Calu3 (cell line): ENCODE measurements at regions of chr7 and their contacts with region 1.

Region 1: DNA sequence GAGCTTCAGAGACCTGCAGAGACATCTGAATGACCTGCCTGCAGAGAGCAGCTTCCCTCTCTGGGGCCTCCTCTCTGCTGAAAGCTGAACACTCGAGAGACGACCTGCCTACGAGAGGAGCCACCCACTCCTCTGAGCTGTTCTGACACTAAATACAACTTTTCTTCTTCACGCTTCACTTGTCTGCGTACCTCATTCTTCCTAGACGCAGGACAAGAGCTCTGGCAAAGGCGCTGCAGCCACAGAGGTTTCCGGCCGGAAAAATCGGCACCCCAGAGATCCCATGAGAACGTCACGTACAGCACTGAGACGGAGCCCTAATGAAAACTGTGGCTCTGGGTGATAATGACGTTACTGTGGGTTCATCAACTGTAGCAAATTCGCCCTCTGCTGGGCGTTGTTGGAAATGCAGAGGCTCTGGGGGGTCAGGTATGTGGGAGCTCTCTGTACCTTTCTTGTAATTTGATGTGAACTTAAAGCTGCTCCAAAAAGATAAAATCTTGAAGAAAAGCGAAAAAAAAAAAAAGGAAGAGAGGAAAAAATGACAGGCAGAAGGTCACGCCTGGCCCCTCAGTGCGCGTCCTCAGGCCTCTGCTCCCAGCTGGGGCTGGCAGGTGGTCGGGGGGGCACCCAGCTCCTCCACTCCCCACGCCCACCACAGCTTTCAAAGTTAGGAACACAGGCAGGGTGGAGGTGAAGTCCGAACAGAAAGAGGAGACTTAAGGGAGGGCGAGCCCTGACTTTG is 120.7 kb downstream of the DYNC2I1 start:
- DNase-seq: peak; percentile 85
- H3K4me3 Mint-ChIP-seq: peak overlapping the region; percentile 51
- H3K27ac Mint-ChIP-seq: no peak overlapping the region
- H3K4me1 Mint-ChIP-seq: peaks cover 8% of the 10 kb centered on the region
- H3K27me3 Mint-ChIP-seq: no peaks in the 10 kb centered on the region
- CTCF ChIP-seq: peak; percentile 76

Region 2: DNA sequence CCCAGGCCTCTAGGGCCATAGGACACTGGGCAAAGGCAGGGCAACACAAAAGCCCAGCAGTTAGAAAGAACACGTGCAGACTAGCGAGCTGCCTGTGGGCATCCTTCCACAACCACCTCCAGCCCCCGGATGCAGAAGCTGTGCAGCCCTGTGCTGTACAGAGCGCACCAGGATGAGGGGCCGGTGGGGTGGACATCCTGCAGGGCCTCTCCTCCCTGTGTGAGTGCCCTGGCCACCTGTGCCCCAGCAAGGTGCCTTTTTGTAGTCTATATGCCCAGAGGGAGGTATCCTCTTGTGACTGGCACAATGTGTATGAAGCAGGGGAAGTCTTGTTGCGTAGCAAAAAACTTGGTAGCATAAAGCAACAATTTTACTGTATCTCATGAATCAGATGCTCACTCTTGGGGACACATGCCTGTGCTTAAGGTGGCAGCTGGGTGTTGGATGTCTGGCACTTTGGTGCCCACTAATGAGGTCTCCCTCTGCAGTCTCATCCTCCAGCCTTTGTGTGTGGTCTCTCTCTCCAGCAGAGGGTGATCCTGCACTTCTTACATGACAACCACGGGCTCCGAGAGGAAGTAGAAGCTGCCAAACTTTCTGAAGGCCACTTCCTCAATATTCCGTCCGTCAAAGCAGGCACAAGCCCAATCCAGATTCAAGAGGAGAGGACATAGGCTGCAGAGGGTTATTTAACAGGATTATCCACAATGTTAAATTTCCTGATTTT is 281.1 kb before region 1 on chr7:
- CTCF ChIA-PET with region 1: no interaction called
- intact Hi-C with region 1: loop called (anchors 1 kb)
- DNase-seq: no peak
- H3K4me3 Mint-ChIP-seq: no peak overlapping the region
- H3K27ac Mint-ChIP-seq: no peak overlapping the region
- H3K4me1 Mint-ChIP-seq: peaks cover 19% of the 10 kb centered on the region
- H3K27me3 Mint-ChIP-seq: no peaks in the 10 kb centered on the region
- CTCF ChIP-seq: no peak

Region 3: DNA sequence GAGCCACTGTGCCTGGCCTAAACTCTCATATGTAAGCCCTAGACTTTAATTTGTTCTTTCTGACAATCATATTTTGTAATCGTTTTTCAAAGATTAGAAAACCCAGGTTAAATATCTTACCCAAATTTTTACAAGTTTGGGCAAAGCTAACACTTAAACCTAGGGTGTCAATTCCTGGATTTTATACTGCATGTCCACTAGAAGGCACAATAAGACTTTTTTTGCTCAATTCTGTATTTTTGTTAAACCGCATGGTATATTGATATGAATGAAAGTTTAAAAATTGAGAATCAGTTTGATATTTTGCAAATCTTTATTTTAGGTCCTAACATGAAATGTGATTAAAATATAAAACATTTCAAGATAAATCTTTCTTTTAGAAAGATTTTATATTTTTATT is 91.4 kb before region 1 on chr7:
- CTCF ChIA-PET with region 1: no interaction called
- intact Hi-C with region 1: loop called (anchors 2 kb)
- DNase-seq: no peak
- H3K4me3 Mint-ChIP-seq: no peak overlapping the region
- H3K27ac Mint-ChIP-seq: no peak overlapping the region
- H3K4me1 Mint-ChIP-seq: no peaks in the 10 kb centered on the region
- H3K27me3 Mint-ChIP-seq: no peaks in the 10 kb centered on the region
- CTCF ChIP-seq: no peak